A549 (cell line): ENCODE measurements at regions of chr14 and their contacts with region 1.

Region 1: DNA sequence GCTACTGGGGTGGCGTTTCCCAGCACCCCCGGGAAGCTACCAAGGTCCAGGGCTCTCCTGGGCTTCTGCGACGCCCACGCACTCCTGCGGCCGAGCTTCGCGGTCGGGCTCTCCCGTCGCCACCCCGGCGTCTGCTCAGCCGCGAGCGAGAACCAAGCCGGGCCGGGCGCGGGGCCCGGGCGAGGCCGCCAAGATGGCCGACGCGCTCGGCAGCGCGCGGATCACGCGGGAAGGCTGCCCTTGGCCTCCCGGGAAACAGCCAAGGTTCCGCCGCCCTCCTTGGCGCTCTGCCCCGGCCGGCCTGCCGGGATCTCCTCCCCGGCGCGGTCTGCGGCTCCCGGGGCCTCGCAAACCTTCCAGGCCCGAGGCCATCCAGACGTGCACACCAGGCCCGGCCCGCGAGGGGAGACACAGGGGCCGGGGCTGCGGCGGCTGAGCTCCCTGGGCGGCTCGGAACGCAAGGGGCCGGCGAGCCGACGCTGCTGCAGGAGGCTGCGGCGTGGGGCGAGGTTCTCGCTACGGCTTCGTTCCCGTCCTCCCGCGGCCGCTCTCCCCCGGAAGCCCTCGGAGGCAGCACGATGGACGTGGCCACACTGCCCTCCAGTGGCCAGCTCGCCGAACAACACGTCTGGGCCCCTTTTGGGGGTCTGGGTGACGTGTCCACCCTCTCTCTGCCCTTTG is 23.5 kb upstream of the ZFP36L1 start:
- DNase-seq: peak; percentile 92 to 93
- ATAC-seq: peak; percentile 90 to 92
- H3K4me3 ChIP-seq: peak overlapping the region; percentile 45
- H3K27ac ChIP-seq: peak overlapping the region; percentile 97 to 100
- H3K4me1 ChIP-seq: peaks cover 47% of the 10 kb centered on the region
- CTCF ChIP-seq: peak; percentile 94
- EP300 ChIP-seq: 0 out of 5 replicates have a peak, but pooled peaks of 1 of the 2 experiments have one; percentile 1
- POLR2A ChIP-seq: peak; percentile 48
- RAD21 ChIP-seq: peak; percentile 98 to 99

Region 2: DNA sequence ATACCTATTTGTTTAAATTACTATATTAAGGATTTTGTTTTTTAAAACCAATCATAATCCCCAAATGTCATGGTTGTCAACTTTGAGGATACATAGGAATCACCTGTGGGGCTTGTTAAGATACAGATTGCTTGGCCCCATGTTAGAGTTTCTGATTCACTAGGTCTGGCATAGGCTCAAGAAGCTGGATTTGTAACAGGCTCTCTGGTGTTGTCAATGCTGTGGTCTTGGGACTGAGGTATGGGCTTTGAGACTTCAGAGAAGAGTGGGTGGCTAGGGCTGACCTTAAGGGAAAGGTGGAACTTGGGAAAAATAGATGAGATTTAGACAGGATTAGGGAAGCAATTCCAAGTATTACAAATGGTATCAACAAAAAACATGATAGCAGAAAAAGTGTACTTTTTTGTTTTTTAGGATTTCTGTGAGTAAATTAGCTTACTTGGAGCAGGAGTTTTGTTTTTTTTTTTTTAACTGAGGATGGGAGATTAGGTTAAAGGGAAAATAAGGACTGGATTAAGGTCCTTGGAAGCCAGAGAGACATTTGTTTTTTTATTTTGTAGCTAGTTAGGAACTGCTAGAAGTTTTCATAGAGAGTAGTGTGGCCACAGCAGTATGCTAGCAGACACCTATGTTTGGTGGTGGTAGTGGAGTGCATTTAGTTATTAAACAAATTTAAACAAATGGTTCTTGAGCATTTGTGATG is 908.2 kb before region 1 on chr14:
- CTCF ChIA-PET with region 1: interaction called, 10 read pairs
- POLR2A ChIA-PET with region 1: no interaction called
- DNase-seq: no peak
- ATAC-seq: no peak
- H3K4me3 ChIP-seq: no peak overlapping the region
- H3K27ac ChIP-seq: no peak overlapping the region
- H3K4me1 ChIP-seq: no peaks in the 10 kb centered on the region
- CTCF ChIP-seq: no peak
- EP300 ChIP-seq: no peak
- POLR2A ChIP-seq: no peak
- RAD21 ChIP-seq: no peak

Region 3: DNA sequence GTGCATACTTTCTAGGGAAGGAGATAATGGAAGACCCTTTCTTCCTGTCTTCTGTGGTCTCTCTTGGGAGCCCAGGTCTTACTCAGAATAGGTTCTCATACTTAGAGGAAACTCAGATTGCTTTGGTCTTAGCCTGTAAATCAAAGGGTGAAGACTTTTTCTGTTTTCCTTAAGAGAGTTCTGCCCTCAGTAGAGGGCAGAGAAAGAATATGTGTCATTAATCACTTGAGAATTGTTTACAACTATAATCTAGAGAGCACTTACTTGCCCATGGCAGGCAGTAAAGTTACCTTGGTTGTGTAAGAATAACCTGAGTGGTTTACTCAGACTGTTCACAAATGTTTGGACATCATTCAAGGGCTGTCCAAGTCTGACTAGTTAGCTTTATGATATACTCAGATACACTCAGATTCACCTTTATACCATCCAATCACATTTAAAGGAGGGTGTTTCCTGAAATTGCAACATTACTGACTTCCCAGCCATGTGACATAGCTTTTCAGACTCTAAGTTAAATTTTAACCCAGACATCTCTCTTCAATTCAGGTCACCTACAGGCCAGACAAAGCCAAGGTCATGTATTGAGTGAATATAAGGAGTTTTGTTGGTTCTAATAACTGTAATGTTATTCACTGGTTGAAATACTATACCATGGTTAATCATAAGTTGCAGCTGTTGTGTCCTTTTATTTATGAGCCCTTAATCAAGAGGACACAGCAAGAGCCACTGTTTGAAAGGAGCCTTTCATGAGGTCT is 624.7 kb before region 1 on chr14:
- CTCF ChIA-PET with region 1: interaction called, 10 read pairs
- POLR2A ChIA-PET with region 1: interaction called, 3 read pairs
- DNase-seq: peak; percentile 62 to 99
- ATAC-seq: peak; percentile 98
- H3K4me3 ChIP-seq: peak overlapping the region; percentile 6; the same call in 1 of the 3 replicates
- H3K27ac ChIP-seq: peak overlapping the region; percentile 93 to 98
- H3K4me1 ChIP-seq: peaks cover 66% of the 10 kb centered on the region
- CTCF ChIP-seq: no peak; the same call in 2 of the 3 replicates
- EP300 ChIP-seq: peak; percentile 98 to 99
- POLR2A ChIP-seq: no peak
- RAD21 ChIP-seq: peak; percentile 60 to 85

Region 4: DNA sequence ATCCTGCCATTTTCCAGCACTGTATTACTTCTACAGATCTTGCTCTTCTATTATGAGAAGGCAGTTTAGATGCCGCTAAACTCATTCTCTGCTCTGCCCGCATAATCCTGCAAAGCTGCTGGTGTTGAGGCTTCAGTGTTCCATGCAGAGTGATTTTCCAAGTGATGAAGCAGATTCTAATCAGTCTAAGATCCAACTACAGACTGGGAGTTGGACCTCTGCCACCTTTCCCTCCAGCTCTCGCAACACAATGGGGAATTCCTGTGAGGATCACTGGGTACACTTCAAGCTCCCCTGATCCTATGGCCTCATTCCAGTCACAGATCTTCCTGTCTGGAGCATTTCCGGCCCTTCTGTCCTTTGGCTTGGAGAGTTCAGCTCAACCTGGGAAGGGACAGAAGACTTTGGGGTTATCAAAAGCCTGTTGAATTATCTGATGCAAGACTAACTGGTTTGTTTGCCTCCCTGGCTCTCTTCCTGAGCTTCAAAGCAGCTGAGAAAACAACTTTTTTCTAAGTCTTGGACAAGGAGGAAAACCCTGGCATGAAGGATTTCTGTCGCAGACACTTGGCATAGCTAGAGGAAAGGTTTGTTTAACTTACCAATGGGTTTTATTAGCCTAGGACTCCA is 357.4 kb before region 1 on chr14:
- CTCF ChIA-PET with region 1: interaction called, 24 read pairs
- POLR2A ChIA-PET with region 1: interaction called, 3 read pairs
- DNase-seq: peak; percentile 96 to 100
- ATAC-seq: peak; percentile 98 to 99
- H3K4me3 ChIP-seq: no peak overlapping the region
- H3K27ac ChIP-seq: peak overlapping the region; percentile 95 to 100
- H3K4me1 ChIP-seq: peaks cover 59% of the 10 kb centered on the region
- CTCF ChIP-seq: no peak
- EP300 ChIP-seq: peak; percentile 99
- POLR2A ChIP-seq: no peak
- RAD21 ChIP-seq: peak; percentile 52 to 92

Region 5: DNA sequence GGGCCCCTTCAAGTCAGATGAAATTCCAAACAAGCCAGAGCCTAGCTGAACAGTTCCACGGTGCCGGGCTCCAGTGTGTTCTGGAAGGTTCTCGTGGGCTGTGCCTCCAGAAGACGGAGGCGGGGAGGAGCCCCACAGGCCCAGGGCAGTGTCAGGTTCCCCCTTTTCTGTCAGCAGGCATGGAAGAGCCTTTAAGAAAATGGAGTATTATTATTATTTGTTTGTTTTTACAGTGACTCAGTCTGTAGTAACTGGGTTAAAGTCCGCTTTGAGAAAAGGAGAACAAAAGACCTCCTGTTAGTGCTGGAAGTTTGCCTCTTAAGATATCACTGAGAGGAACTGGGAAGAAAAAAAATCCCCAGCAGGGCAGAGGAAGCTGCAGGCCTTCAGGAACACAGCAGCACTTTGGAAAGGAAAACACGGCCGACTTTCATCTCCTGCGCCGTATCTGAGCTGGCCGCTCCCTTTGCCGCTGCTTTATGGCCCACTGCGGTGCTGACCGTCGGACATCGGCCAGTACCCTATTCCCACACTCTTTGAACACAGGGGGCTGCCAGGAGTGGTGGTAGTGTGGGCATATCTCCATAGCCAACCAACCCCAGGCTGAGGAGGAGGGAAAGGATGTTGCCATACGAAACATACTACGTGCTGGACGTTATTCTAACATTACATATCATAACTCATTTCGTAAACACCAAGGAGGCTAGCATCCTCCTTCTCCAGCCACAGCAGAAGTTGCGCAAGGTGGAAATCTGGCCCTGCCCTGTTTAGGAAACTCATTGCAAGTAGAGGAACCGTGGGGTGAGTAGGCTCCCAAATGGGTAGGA is 217.6 kb before region 1 on chr14:
- CTCF ChIA-PET with region 1: no interaction called
- POLR2A ChIA-PET with region 1: no interaction called
- DNase-seq: peak; percentile 92 to 95
- ATAC-seq: peak; percentile 88 to 93
- H3K4me3 ChIP-seq: peak overlapping the region; percentile 25; the same call in 2 of the 3 replicates
- H3K27ac ChIP-seq: peak overlapping the region; percentile 94 to 99
- H3K4me1 ChIP-seq: peaks cover 34% of the 10 kb centered on the region
- CTCF ChIP-seq: no peak
- EP300 ChIP-seq: peak; percentile 14 to 34; a peak in 2 of 5 replicates
- POLR2A ChIP-seq: peak; percentile 17
- RAD21 ChIP-seq: peak in 1 of 2 experiments; percentile 28; a peak in 2 of 5 replicates

Region 6: DNA sequence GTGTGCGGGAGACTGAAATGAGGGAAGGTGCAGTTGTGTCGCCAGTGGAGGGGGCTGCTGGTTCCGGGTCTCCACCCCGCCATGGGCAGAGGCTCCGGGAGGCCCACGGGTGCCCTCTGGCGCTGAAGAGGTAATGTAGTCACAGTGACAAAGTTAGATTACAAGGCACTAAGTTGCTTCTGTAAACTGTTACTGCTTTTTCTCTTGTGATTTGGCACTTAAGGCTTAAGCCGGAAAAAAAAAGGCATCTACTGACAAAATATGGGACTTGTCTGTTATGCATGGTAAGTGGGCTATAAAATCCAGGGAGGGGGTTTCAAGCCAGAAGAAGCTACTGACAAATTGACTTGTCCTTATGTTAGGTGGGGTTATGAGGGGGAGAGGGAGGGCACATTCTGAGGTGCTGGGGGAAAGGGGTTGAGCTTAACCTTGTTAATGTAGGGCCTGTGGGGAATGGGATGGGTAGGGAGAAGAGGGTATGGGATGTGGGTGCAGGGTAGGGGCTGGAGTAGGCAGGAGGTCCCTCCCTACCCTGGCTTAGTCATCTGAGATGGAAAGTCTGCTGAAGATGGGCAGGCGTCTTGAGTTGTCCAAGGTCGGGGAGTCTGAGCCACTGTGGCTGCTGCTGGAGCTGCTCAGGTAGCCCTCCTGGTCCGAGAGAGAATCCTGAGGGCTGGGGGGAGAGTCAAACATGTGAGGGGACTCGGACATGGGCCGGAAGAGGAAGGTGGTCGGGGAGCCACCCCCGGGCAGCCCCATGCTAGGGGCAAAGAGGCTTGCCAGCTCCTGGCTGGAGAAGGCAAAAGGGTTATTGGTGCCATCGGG is 27.2 kb before region 1 on chr14:
- CTCF ChIA-PET with region 1: interaction called, 85 read pairs
- POLR2A ChIA-PET with region 1: interaction called, 187 read pairs
- DNase-seq: peak; percentile 45 to 89
- ATAC-seq: peak in 1 of 2 experiments; percentile 5; a peak in 3 of 6 replicates
- H3K4me3 ChIP-seq: peak overlapping the region; percentile 95
- H3K27ac ChIP-seq: peak overlapping the region; percentile 99 to 100
- H3K4me1 ChIP-seq: peaks cover 41% of the 10 kb centered on the region
- CTCF ChIP-seq: peak; percentile 67
- EP300 ChIP-seq: no peak
- POLR2A ChIP-seq: no peak
- RAD21 ChIP-seq: peak; percentile 79 to 90

Region 7: DNA sequence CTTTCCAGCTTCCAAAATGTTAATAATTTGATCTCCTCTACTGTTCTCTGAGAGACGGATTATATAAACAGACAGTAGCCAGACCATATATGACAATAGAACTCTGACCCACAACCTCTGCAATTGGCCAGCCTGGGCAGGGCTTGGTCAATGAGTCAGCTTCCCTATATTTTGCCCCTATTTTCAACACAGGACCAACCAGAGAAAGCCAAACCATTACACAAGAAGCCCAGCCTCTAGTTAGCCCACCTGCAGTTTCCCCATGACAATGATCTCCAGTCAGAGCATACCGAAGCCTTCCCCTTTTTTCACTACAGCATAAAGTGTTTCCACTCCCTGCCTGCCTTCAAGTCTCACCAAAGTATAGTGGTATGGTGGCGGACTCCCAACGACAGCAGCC is 367.3 kb after region 1 on chr14:
- CTCF ChIA-PET with region 1: no interaction called
- POLR2A ChIA-PET with region 1: no interaction called
- DNase-seq: no peak
- ATAC-seq: no peak
- H3K4me3 ChIP-seq: no peak overlapping the region
- H3K27ac ChIP-seq: no peak overlapping the region
- H3K4me1 ChIP-seq: no peaks in the 10 kb centered on the region
- CTCF ChIP-seq: no peak
- EP300 ChIP-seq: no peak
- POLR2A ChIP-seq: no peak
- RAD21 ChIP-seq: no peak

Region 8: DNA sequence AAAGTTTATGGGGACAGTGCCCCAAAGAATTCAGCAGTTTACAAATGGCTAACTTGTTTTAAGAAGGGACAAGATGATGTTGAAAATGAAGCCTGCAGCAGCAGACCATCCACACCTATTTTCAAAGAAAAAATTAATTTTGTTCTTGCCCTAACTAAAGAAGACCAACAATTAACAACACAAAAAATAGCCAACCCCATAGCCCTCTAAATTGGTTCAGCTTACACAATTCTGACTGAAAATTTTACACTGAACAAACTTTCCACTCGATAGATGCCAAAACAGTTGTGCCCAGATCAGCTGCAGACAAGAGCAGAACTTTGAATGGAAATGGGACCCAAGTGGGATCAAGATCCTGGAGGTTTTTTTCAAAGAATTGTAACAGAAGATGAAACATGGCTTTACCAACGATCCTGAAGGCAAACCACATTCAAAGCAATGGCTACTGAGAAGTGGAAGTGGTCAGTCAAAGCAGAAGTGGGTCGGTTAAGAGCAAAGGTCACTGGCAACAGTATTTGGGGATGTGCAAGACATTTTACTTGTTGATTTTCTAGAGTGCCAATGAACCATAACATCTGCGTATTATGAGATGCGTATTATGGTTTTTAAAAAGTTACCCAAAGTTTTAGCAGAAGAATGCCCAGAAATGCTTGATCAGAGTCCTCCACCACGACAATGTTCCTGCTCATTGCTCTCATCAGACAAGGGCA is 612.0 kb after region 1 on chr14:
- CTCF ChIA-PET with region 1: no interaction called
- POLR2A ChIA-PET with region 1: no interaction called
- DNase-seq: no peak
- ATAC-seq: no peak
- H3K4me3 ChIP-seq: no peak overlapping the region
- H3K27ac ChIP-seq: no peak overlapping the region
- H3K4me1 ChIP-seq: peaks cover 8% of the 10 kb centered on the region; the same call in 2 of the 3 replicates
- CTCF ChIP-seq: no peak
- EP300 ChIP-seq: no peak
- POLR2A ChIP-seq: no peak
- RAD21 ChIP-seq: no peak